Activated T-helper 1 cell treated with anti-CD3 and anti-CD28 coated beads, Interleukin-12 subunit alpha, Interleukin-12 subunit beta, Interleukin-2, Interleukin-4 antibody, amounts not matched to agents 30 ng/mL and 10 ng/mL and 1 ng/mL, durations not matched to agents 14 hours and 24 hours and 36 hours (primary cell): ENCODE measurements at regions of chr6 and their contacts with region 1.

Region 1: GRCh38 chr6:41560431-41561192 is 14.4 kb downstream of the FOXP4 start:
- DNase-seq: peak; percentile 79
- H3K4me3 Mint-ChIP-seq: peak overlapping the region; percentile 87
- H3K27ac Mint-ChIP-seq: peak overlapping the region; percentile 82
- H3K4me1 Mint-ChIP-seq: peaks cover 23% of the 10 kb centered on the region
- H3K27me3 Mint-ChIP-seq: peaks cover 35% of the 10 kb centered on the region

Region 2: GRCh38 chr6:41531591-41532582 is 28.7 kb before region 1 on chr6:
- intact Hi-C with region 1: loop called (anchors 1 kb)
- DNase-seq: peak; percentile 63
- H3K4me3 Mint-ChIP-seq: peak overlapping the region; percentile 76
- H3K27ac Mint-ChIP-seq: peak overlapping the region; percentile 92
- H3K4me1 Mint-ChIP-seq: peaks cover 50% of the 10 kb centered on the region
- H3K27me3 Mint-ChIP-seq: peaks cover 38% of the 10 kb centered on the region

Region 3: DNA sequence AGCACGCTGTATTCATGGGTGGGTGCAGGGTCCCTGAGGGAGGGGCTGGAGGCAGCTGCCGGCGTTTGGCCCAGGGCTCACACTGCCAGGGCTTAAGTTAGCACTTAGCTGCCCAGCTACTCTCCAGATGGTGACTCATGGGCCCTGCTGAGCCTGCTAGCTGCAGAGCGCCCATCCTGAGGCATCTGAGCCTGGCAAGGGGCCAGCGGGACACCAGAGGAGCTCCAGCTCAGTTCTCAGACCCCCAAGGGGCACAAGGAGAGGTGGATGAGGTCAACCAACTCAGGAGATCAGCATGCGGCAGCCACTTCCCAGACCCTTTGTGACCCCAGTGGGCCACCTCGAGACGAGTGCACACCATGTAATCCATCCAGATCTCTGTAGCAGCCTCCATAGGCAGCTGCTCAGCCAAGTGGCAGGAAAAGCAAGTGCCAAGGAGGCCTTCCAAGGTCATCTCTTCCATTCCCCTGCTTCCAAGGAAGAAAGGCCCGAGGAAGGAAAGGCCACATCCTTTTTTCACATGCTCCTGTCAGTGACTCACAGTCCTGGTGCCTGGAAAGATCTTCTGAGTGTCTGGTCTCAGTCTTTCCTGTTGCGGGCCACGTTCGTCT is 20.9 kb after region 1 on chr6:
- intact Hi-C with region 1: no loop called
- DNase-seq: no peak
- H3K4me3 Mint-ChIP-seq: no peak overlapping the region
- H3K27ac Mint-ChIP-seq: no peak overlapping the region
- H3K4me1 Mint-ChIP-seq: no peaks in the 10 kb centered on the region
- H3K27me3 Mint-ChIP-seq: no peaks in the 10 kb centered on the region

Region 4: DNA sequence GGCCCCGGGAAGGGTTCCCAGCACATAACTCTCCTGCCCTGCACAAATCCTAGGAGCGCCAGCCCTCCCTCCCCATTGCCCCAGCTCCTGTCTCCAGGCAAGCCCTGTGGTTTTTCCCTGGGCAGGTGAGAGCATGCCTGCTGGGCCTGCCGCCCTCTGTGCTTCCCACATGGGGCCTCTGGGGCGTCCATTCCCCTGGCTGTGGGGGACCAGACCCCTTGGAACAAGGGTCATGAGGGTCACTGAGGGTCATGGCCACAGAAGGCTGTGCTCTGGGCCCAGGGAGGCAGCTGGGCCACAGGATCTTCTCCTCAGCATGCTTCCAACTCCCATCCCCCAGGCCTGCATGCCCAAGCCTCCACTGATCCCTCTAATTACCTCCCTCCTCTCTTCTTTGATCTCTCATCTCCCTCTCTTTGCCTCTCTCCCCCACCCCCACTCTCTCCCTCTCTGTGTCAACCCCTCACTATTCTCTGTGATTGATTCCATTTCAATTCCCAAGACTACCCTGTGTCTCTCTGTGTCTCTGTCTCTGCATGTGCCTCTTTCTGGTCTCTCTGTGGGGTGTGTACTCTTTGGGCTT is 83.8 kb after region 1 on chr6:
- intact Hi-C with region 1: no loop called
- DNase-seq: no peak
- H3K4me3 Mint-ChIP-seq: no peak overlapping the region
- H3K27ac Mint-ChIP-seq: no peak overlapping the region
- H3K4me1 Mint-ChIP-seq: no peaks in the 10 kb centered on the region
- H3K27me3 Mint-ChIP-seq: peaks cover 26% of the 10 kb centered on the region